ENCODE measurements at regions of chr3 and their contacts with region 1.

Region 1: DNA sequence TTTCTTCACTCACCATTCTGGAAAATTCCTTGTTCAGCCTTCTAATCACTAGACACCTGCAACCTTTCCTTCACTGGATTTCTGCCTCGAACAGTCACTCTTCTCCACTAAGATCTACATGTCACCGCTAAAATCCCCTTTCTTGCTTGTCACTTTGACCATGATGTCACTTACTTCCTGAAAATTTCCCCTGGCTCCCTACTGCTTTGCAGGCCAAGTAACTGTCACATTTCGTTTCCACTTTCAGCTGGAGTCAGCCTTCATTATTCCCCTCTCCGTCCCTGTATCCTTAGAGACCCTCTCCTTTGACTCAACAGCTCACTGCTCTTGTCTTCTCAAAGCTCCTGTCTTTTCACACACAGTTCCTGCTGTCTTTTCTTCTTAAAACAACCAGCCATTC is 15.9 kb downstream of the CHL1 start:
- DNase-seq: no peak
- ATAC-seq: peak; percentile 91
- H3K4me3 Mint-ChIP-seq: peak overlapping the region; percentile 64
- H3K27ac Mint-ChIP-seq: peak overlapping the region; percentile 83
- H3K4me1 Mint-ChIP-seq: peaks cover 21% of the 10 kb centered on the region
- H3K27me3 Mint-ChIP-seq: no peaks in the 10 kb centered on the region
- CTCF ChIP-seq: no peak

Region 2: DNA sequence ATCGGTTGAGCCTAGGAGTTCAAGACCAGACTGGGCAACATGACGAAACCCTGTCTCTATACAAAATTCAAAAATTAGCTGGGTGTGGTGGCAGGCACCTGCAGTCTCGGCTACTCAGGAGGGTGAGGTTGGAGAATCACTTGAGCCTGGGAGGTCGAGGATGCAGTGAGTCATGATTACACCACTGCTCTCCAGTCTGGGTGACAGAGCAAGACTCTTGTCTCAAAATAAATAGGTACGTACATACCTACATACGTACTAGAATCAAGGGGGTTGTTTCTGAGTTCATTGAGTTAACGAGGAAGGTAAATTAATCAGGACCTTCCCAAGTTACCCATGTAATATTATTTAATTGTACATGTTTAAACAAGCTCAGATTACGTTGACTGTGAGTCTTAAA is 81.7 kb after region 1 on chr3:
- CTCF ChIA-PET with region 1: no interaction called
- POLR2A ChIA-PET with region 1: no interaction called
- intact Hi-C with region 1: loop called (anchors 2 kb)
- DNase-seq: no peak
- ATAC-seq: no peak
- H3K4me3 Mint-ChIP-seq: no peak overlapping the region
- H3K27ac Mint-ChIP-seq: no peak overlapping the region
- H3K4me1 Mint-ChIP-seq: peaks cover 51% of the 10 kb centered on the region
- H3K27me3 Mint-ChIP-seq: no peaks in the 10 kb centered on the region
- CTCF ChIP-seq: no peak

Region 3: GRCh38 chr3:396293-396692 is 183.9 kb after region 1 on chr3:
- CTCF ChIA-PET with region 1: no interaction called
- POLR2A ChIA-PET with region 1: no interaction called
- intact Hi-C with region 1: no loop called
- DNase-seq: no peak
- ATAC-seq: no peak
- H3K4me3 Mint-ChIP-seq: no peak overlapping the region
- H3K27ac Mint-ChIP-seq: no peak overlapping the region
- H3K4me1 Mint-ChIP-seq: no peaks in the 10 kb centered on the region
- H3K27me3 Mint-ChIP-seq: no peaks in the 10 kb centered on the region
- CTCF ChIP-seq: no peak